MCF 10A (cell line): ENCODE measurements at regions of chr19 and their contacts with region 1.

Region 1: GRCh38 chr19:12789904-12790619 is 1.2 kb upstream of the JUNB start:
- DNase-seq: peak; percentile 98
- H3K4me3 Mint-ChIP-seq: peak overlapping the region; percentile 94
- H3K27ac Mint-ChIP-seq: peak overlapping the region; percentile 98
- H3K4me1 Mint-ChIP-seq: peaks cover 31% of the 10 kb centered on the region
- H3K27me3 Mint-ChIP-seq: no peaks in the 10 kb centered on the region
- CTCF ChIP-seq: no peak

Region 2: GRCh38 chr19:12736995-12737834 is 52.8 kb before region 1 on chr19 and contains the start of gene GET3:
- CTCF ChIA-PET with region 1: interaction called, 3 read pairs
- POLR2A ChIA-PET with region 1: interaction called, 33 read pairs
- intact Hi-C with region 1: no loop called
- DNase-seq: peak; percentile 100
- H3K4me3 Mint-ChIP-seq: peak within 1 kb of the TSS; percentile 99
- H3K27ac Mint-ChIP-seq: peak within 1 kb of the TSS; percentile 100
- H3K4me1 Mint-ChIP-seq: peaks cover 22% of the 10 kb centered on the region
- H3K27me3 Mint-ChIP-seq: no peaks in the 10 kb centered on the region
- CTCF ChIP-seq: no peak
- total RNA-seq, gene GET3: 62.9 and 67.1 TPM in 2 replicates

Region 3: DNA sequence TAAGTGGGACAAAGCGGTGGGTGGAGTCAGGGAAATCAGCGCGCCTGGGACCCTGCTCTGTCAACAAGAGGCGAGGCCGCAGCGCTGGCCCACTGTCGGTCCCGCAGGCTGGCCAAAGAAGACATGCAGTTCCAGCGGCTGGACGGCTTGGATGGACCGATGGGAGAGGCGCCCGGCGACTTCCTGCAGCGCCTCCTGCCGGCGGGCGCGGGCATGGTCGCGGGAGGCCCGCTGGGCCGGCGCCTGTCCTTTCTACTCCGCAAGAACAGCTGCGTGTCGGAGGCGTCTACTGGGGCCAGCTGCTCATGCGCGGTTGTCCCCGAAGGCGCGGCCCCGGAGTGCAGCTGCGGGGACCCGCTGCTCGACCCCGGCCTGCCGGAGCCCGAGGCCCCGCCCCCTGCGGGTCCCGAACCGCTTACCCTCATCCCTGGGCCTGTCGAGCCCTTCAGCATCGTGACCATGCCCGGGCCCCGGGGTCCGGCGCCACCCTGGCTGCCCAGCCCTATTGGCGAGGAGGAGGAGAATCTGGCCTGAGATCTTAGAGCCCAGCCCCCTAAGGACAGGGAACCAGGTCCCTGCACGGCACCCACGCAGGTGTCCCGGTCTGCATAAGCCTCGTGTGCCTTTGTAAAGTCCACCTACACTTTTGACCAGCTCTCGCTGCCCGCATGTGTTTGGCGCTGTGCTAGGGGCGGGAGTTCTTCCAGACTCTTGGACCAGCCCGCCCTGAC is 32.4 kb before region 1 on chr19:
- CTCF ChIA-PET with region 1: interaction called, 307 read pairs
- POLR2A ChIA-PET with region 1: interaction called, 8 read pairs
- intact Hi-C with region 1: no loop called
- DNase-seq: peak; percentile 72
- H3K4me3 Mint-ChIP-seq: peak overlapping the region; percentile 35
- H3K27ac Mint-ChIP-seq: no peak overlapping the region
- H3K4me1 Mint-ChIP-seq: peaks cover 5% of the 10 kb centered on the region
- H3K27me3 Mint-ChIP-seq: no peaks in the 10 kb centered on the region
- CTCF ChIP-seq: peak; percentile 97

Region 4: GRCh38 chr19:12777217-12778016 is 12.6 kb before region 1 on chr19:
- CTCF ChIA-PET with region 1: interaction called, 278 read pairs
- POLR2A ChIA-PET with region 1: interaction called, 410 read pairs
- intact Hi-C with region 1: loop called (anchors 1 kb)
- DNase-seq: peak; percentile 80
- H3K4me3 Mint-ChIP-seq: peak overlapping the region; percentile 79
- H3K27ac Mint-ChIP-seq: peak overlapping the region; percentile 81
- H3K4me1 Mint-ChIP-seq: peaks cover 13% of the 10 kb centered on the region
- H3K27me3 Mint-ChIP-seq: no peaks in the 10 kb centered on the region
- CTCF ChIP-seq: peak; percentile 83

Region 5: GRCh38 chr19:12825254-12826131 is 35.4 kb after region 1 on chr19:
- CTCF ChIA-PET with region 1: no interaction called
- POLR2A ChIA-PET with region 1: no interaction called
- intact Hi-C with region 1: no loop called
- DNase-seq: no peak
- H3K4me3 Mint-ChIP-seq: no peak overlapping the region
- H3K27ac Mint-ChIP-seq: no peak overlapping the region
- H3K4me1 Mint-ChIP-seq: no peaks in the 10 kb centered on the region
- H3K27me3 Mint-ChIP-seq: no peaks in the 10 kb centered on the region
- CTCF ChIP-seq: no peak

Region 6: GRCh38 chr19:13009344-13009743 is 219.3 kb after region 1 on chr19:
- CTCF ChIA-PET with region 1: no interaction called
- POLR2A ChIA-PET with region 1: no interaction called
- intact Hi-C with region 1: no loop called
- DNase-seq: peak; percentile 39
- H3K4me3 Mint-ChIP-seq: no peak overlapping the region
- H3K27ac Mint-ChIP-seq: no peak overlapping the region
- H3K4me1 Mint-ChIP-seq: peaks cover 6% of the 10 kb centered on the region
- H3K27me3 Mint-ChIP-seq: no peaks in the 10 kb centered on the region
- CTCF ChIP-seq: no peak

Region 7: GRCh38 chr19:13150187-13150930 is 360.3 kb after region 1 on chr19 and contains the starts of genes IER2 and STX10:
- CTCF ChIA-PET with region 1: interaction called, 3 read pairs
- POLR2A ChIA-PET with region 1: interaction called, 10 read pairs
- intact Hi-C with region 1: no loop called
- DNase-seq: peak; percentile 97
- H3K4me3 Mint-ChIP-seq: peak within 1 kb of the TSS; percentile 82
- H3K27ac Mint-ChIP-seq: peak within 1 kb of the TSS; percentile 92
- H3K4me1 Mint-ChIP-seq: peaks cover 11% of the 10 kb centered on the region
- H3K27me3 Mint-ChIP-seq: no peaks in the 10 kb centered on the region
- CTCF ChIP-seq: peak; percentile 25
- total RNA-seq, gene IER2: 63.0 and 92.3 TPM in 2 replicates
- total RNA-seq, gene STX10: 35.2 and 37.9 TPM in 2 replicates